Activated CD4-positive, alpha-beta T cell treated with anti-CD3 and anti-CD28 coated beads, Interleukin-2, amount 10 ng/mL, durations not matched to agents 24 days and 14 days (primary cell): ENCODE measurements at regions of chr12 and their contacts with region 1.

Region 1: GRCh38 chr12:120116792-120117651 is 469 bp upstream of the RAB35 start:
- DNase-seq: peak; percentile 100
- H3K4me3 Mint-ChIP-seq: peak overlapping the region; percentile 90
- H3K27ac Mint-ChIP-seq: peak overlapping the region; percentile 92
- H3K4me1 Mint-ChIP-seq: peaks cover 72% of the 10 kb centered on the region
- H3K27me3 Mint-ChIP-seq: no peaks in the 10 kb centered on the region

Region 2: GRCh38 chr12:120093592-120094355 is 23.2 kb before region 1 on chr12:
- intact Hi-C with region 1: no loop called
- DNase-seq: no peak
- H3K4me3 Mint-ChIP-seq: no peak overlapping the region
- H3K27ac Mint-ChIP-seq: no peak overlapping the region
- H3K4me1 Mint-ChIP-seq: peaks cover 3% of the 10 kb centered on the region
- H3K27me3 Mint-ChIP-seq: no peaks in the 10 kb centered on the region

Region 3: GRCh38 chr12:120142231-120142877 is 25.3 kb after region 1 on chr12:
- intact Hi-C with region 1: no loop called
- DNase-seq: no peak
- H3K4me3 Mint-ChIP-seq: no peak overlapping the region
- H3K27ac Mint-ChIP-seq: no peak overlapping the region
- H3K4me1 Mint-ChIP-seq: no peaks in the 10 kb centered on the region
- H3K27me3 Mint-ChIP-seq: no peaks in the 10 kb centered on the region

Region 4: DNA sequence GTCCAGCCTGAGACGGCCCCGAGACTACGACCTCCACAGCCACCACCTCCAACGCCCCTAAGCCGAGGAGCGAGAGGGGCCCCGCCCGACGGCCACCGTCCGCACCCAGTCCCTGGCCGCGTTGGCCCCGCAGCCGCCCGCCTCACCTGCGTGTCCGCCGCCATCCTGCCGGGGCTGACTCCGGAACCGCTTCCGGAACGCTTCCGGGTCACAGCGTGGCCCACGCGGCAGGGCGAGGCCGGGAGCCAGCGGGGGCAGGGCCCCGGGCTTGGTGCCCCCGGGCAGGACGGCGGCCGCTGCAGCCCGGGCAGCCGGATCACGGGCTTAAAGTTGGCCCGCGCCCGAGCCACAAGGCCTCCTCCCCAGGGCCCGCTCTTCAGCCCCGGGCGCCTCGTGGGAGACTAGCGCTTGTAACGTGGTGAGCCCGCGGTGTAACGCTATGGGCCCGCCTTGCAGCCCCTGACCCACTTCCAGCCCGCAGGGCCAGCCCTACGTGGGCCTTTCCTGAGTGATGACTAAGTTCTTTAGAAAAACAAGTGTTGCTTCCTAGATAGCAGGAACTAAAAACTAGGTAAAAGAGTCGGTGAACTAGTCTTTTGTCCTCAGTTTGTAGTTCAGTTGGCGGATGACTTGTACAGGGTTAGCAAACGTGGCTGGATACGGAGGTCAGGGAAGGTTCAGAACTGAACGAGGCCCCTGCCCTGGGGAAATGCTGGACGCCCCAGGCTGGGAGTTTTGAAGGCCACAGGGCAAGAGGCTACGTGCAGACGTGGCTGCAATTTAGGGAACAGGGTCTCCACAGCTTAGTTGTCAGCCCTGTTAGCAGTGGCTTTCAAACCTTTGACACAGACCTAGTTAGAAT is 77.7 kb after region 1 on chr12 and contains the start of gene GCN1:
- intact Hi-C with region 1: loop called (anchors 2 kb)
- DNase-seq: peak; percentile 98
- H3K4me3 Mint-ChIP-seq: peak within 1 kb of the TSS; percentile 84
- H3K27ac Mint-ChIP-seq: peak within 1 kb of the TSS; percentile 90
- H3K4me1 Mint-ChIP-seq: peaks cover 37% of the 10 kb centered on the region
- H3K27me3 Mint-ChIP-seq: no peaks in the 10 kb centered on the region
- total RNA-seq, gene GCN1: 169 and 176 TPM in 2 replicates

Region 5: GRCh38 chr12:120437754-120438494 is 320.9 kb after region 1 on chr12 and contains the start of gene COX6A1:
- intact Hi-C with region 1: no loop called
- DNase-seq: peak; percentile 99
- H3K4me3 Mint-ChIP-seq: peak within 1 kb of the TSS; percentile 89
- H3K27ac Mint-ChIP-seq: peak within 1 kb of the TSS; percentile 94
- H3K4me1 Mint-ChIP-seq: peaks cover 23% of the 10 kb centered on the region
- H3K27me3 Mint-ChIP-seq: peaks cover 4% of the 10 kb centered on the region
- total RNA-seq, gene COX6A1: 362 and 363 TPM in 2 replicates